Heart left ventricle (tissue), 16 donors: ENCODE measurements at regions of chr5 and their contacts with region 1.

Region 1: GRCh38 chr5:41695920-41696582 is 174.2 kb downstream of the OXCT1 start:
- DNase-seq: no peak
- ATAC-seq: no peak
- H3K4me3 ChIP-seq: no peak overlapping the region
- H3K27ac ChIP-seq: no peak overlapping the region
- H3K4me1 ChIP-seq: no peaks in the 10 kb centered on the region
- H3K27me3 ChIP-seq: no peaks in the 10 kb centered on the region
- CTCF ChIP-seq: peak in 6 of 12 donors; percentile 8 to 28 (median 24)
- POLR2A ChIP-seq: no peak

Region 2: GRCh38 chr5:41735213-41735612 is 39.2 kb after region 1 on chr5:
- intact Hi-C with region 1: no loop called
- DNase-seq: no peak
- ATAC-seq: no peak
- H3K4me3 ChIP-seq: no peak overlapping the region
- H3K27ac ChIP-seq: no peak overlapping the region
- H3K4me1 ChIP-seq: no peaks in the 10 kb centered on the region
- H3K27me3 ChIP-seq: no peaks in the 10 kb centered on the region
- CTCF ChIP-seq: no peak
- POLR2A ChIP-seq: no peak

Region 3: GRCh38 chr5:41809128-41809527 is 113.1 kb after region 1 on chr5:
- intact Hi-C with region 1: no loop called
- DNase-seq: no peak
- ATAC-seq: no peak
- H3K4me3 ChIP-seq: no peak overlapping the region
- H3K27ac ChIP-seq: no peak overlapping the region
- H3K4me1 ChIP-seq: peaks cover 0 to 18% (median 2%) of the 10 kb centered on the region in 12 donors
- H3K27me3 ChIP-seq: no peaks in the 10 kb centered on the region
- CTCF ChIP-seq: no peak
- POLR2A ChIP-seq: no peak

Region 4: DNA sequence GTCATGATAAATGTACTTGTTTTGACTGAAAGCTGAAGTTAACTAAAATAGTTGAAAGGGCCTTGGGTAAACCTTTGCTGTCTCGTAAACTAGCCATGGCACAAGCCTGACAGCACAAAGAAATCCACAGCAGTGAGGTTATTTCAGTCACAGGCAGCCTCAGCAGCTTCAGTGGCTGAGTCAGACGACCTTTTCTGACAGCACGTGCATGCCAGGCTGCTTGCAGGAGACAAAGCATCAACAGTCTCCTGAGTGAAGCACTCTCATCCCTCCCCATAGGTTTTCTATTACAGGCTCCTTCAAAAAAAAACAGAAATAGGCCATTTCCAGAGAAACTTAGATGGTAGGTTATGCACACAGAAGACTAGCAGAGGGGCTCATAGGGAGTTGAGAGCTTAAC is 139.6 kb after region 1 on chr5:
- intact Hi-C with region 1: loop called in 1 of 10 experiments (anchors 10 kb)
- DNase-seq: peak; percentile 55 to 84 (median 64)
- ATAC-seq: peak; percentile 94 to 97 (median 96)
- H3K4me3 ChIP-seq: no peak overlapping the region
- H3K27ac ChIP-seq: peak overlapping the region in 11 of 12 donors; percentile 1 to 85 (median 65)
- H3K4me1 ChIP-seq: peaks cover 0 to 28% (median 15%) of the 10 kb centered on the region in 12 donors
- H3K27me3 ChIP-seq: no peaks in the 10 kb centered on the region
- CTCF ChIP-seq: no peak
- POLR2A ChIP-seq: no peak